Activated CD4-positive, alpha-beta memory T cell treated with anti-CD3 and anti-CD28 coated beads for 36 hours (primary cell): ENCODE measurements at regions of chr6 and their contacts with region 1.

Region 1: DNA sequence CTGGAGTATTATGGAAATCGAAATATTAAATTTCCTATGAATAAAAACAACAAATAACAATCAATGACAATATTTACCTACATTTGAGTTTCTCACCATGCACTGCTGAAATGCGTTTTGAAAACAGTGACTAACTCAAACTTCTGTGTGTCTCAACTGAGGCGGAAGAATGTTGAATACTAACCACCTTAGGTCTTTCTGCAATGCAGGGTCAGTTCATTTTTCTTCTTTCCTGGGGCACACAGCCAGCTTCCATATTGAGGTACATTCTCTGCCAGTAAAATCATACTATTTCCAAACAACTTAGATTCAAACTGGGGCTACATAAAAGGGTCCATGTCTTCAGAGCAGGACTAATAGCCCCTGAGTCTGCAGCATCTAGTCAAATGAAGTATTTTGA is 310.1 kb downstream of the UTRN start:
- DNase-seq: no peak
- H3K4me3 Mint-ChIP-seq: no peak overlapping the region
- H3K27ac Mint-ChIP-seq: no peak overlapping the region
- H3K4me1 Mint-ChIP-seq: peaks cover 18% of the 10 kb centered on the region
- H3K27me3 Mint-ChIP-seq: no peaks in the 10 kb centered on the region

Region 2: GRCh38 chr6:144613859-144614258 is 18.6 kb after region 1 on chr6:
- CTCF ChIA-PET with region 1: no interaction called
- POLR2A ChIA-PET with region 1: interaction called, 3 read pairs
- intact Hi-C with region 1: loop called (anchors 2 kb)
- DNase-seq: no peak
- H3K4me3 Mint-ChIP-seq: no peak overlapping the region
- H3K27ac Mint-ChIP-seq: no peak overlapping the region
- H3K4me1 Mint-ChIP-seq: peaks cover 14% of the 10 kb centered on the region
- H3K27me3 Mint-ChIP-seq: no peaks in the 10 kb centered on the region

Region 3: GRCh38 chr6:144653885-144654505 is 58.7 kb after region 1 on chr6:
- CTCF ChIA-PET with region 1: no interaction called
- POLR2A ChIA-PET with region 1: interaction called, 4 read pairs
- intact Hi-C with region 1: loop called (anchors 1 kb)
- DNase-seq: no peak
- H3K4me3 Mint-ChIP-seq: peak overlapping the region; percentile 13
- H3K27ac Mint-ChIP-seq: no peak overlapping the region
- H3K4me1 Mint-ChIP-seq: peaks cover 42% of the 10 kb centered on the region
- H3K27me3 Mint-ChIP-seq: no peaks in the 10 kb centered on the region